Mucosa of descending colon (tissue), 3 donors: ENCODE measurements at regions of chr6 and their contacts with region 1.

Region 1: DNA sequence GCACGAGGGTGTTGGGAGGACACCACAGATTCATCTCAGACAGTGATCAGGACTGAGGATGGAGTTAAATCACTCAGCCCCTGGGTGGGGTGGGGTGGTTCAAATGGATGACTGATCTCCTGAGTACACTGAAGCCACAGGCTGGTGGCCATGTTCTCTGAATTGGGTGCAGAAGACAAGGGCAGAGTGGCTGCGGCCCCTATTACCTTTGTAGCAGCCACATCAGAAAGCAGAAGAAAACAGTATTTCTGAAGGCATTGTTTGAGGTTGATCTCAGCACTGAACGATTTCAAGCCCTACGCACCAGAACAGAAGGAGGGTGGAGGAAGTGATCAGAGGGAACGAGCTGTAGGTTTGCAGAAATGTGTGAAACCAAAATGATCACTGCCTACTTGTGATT is 71.6 kb downstream of the SH3BGRL2 start:
- DNase-seq: no peak
- ATAC-seq: no peak
- H3K4me3 ChIP-seq: no peak overlapping the region
- H3K4me1 ChIP-seq: no peaks in the 10 kb centered on the region
- CTCF ChIP-seq: no peak

Region 2: DNA sequence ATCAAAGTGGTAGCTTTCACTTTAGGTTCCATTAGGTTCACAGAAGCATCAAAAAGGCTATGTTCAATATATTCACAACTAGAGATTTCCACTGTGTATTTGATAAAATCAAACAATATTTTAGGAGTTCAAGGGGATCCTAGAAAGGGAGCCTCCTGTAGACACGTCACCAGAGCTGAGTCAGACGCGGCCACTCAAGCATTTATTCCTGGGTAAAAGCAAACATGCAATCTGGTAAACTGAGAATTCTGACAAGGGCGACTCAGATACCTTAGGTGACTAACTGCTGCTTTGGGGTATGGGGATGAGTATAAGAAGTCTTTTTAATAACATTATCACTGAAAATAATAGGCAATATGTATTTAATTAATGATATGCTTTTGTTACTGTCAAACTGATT is 349.5 kb before region 1 on chr6:
- intact Hi-C with region 1: no loop called
- DNase-seq: no peak
- ATAC-seq: no peak
- H3K4me3 ChIP-seq: no peak overlapping the region
- H3K4me1 ChIP-seq: no peaks in the 10 kb centered on the region
- CTCF ChIP-seq: no peak

Region 3: GRCh38 chr6:79498842-79499241 is 203.8 kb before region 1 on chr6:
- intact Hi-C with region 1: no loop called
- DNase-seq: no peak
- ATAC-seq: no peak
- H3K4me3 ChIP-seq: no peak overlapping the region
- H3K4me1 ChIP-seq: no peaks in the 10 kb centered on the region
- CTCF ChIP-seq: no peak

Region 4: GRCh38 chr6:79570129-79571029 is 132.3 kb before region 1 on chr6:
- intact Hi-C with region 1: loop called in 1 of 2 experiments (anchors 10 kb)
- DNase-seq: peak in 2 of 3 donors; percentile 34 to 68
- ATAC-seq: peak; percentile 88
- H3K4me3 ChIP-seq: no peak overlapping the region
- H3K4me1 ChIP-seq: peaks cover 12% of the 10 kb centered on the region
- CTCF ChIP-seq: no peak

Region 5: DNA sequence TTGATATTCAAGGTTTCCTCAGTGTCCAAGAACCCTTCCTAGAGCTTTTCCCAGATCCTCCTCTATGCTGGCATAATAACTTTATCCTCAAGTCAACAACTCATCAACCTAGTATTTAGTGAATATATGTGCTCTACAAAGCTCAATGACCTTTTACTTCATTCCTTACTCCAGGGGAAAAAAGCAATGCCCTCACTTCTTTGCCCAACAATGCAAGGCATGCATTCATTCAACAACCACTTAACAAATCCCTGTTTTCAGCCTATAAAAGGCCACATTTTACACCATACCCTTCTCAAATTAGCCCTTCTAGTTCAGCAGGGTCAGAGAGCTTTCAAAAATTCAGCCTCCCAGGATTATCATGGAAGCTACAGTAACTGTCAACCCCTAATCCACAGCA is 227.3 kb after region 1 on chr6:
- intact Hi-C with region 1: no loop called
- DNase-seq: no peak
- ATAC-seq: no peak
- H3K4me3 ChIP-seq: no peak overlapping the region
- H3K4me1 ChIP-seq: no peaks in the 10 kb centered on the region
- CTCF ChIP-seq: no peak